WTC11 (cell line): ENCODE measurements at regions of chr12 and their contacts with region 1.

Region 1: GRCh38 chr12:54279866-54280467 is at the start of gene CBX5:
- DNase-seq: peak; percentile 99
- ATAC-seq: peak; percentile 53
- H3K4me3 Mint-ChIP-seq: no peak within 1 kb of the TSS
- H3K27ac Mint-ChIP-seq: no peak within 1 kb of the TSS
- H3K4me1 Mint-ChIP-seq: peaks cover 58% of the 10 kb centered on the region
- H3K27me3 Mint-ChIP-seq: no peaks in the 10 kb centered on the region
- CTCF ChIP-seq: no peak
- total RNA-seq, gene CBX5: 182 to 218 TPM (median 216 TPM) in 3 replicates

Region 2: GRCh38 chr12:54140588-54141388 is 139.2 kb before region 1 on chr12:
- CTCF ChIA-PET with region 1: no interaction called
- POLR2A ChIA-PET with region 1: no interaction called
- DNase-seq: no peak
- ATAC-seq: peak; percentile 59
- H3K4me3 Mint-ChIP-seq: no peak overlapping the region; the same call in 1 of the 2 replicates
- H3K27ac Mint-ChIP-seq: no peak overlapping the region
- H3K4me1 Mint-ChIP-seq: peaks cover 14% of the 10 kb centered on the region
- H3K27me3 Mint-ChIP-seq: peaks cover 90% of the 10 kb centered on the region
- CTCF ChIP-seq: no peak

Region 3: GRCh38 chr12:54294152-54294952 is 14.4 kb after region 1 on chr12:
- CTCF ChIA-PET with region 1: interaction called, 7 read pairs
- POLR2A ChIA-PET with region 1: interaction called, 11 read pairs
- DNase-seq: peak; percentile 88
- ATAC-seq: peak; percentile 76
- H3K4me3 Mint-ChIP-seq: no peak overlapping the region
- H3K27ac Mint-ChIP-seq: no peak overlapping the region
- H3K4me1 Mint-ChIP-seq: peaks cover 4% of the 10 kb centered on the region
- H3K27me3 Mint-ChIP-seq: peaks cover 4% of the 10 kb centered on the region
- CTCF ChIP-seq: peak; percentile 77